GM23248 (cell line): ENCODE measurements at regions of chr7 and their contacts with region 1.

Region 1: GRCh38 chr7:47991741-47992311 is 12.4 kb upstream of the HUS1 start:
- DNase-seq: peak; percentile 84
- H3K4me3 ChIP-seq: peak overlapping the region; percentile 75
- H3K27ac ChIP-seq: peak overlapping the region; percentile 23; the same call in 1 of the 2 replicates
- H3K4me1 ChIP-seq: peaks cover 6% of the 10 kb centered on the region; the same call in 1 of the 2 replicates
- H3K27me3 ChIP-seq: no peaks in the 10 kb centered on the region

Region 2: GRCh38 chr7:48089046-48090003 is 97.5 kb after region 1 on chr7 and contains the start of gene UPP1:
- in situ Hi-C with region 1: loop called (anchors 10 kb)
- DNase-seq: peak; percentile 52
- H3K4me3 ChIP-seq: peak within 1 kb of the TSS; percentile 71
- H3K27ac ChIP-seq: peak within 1 kb of the TSS; percentile 92
- H3K4me1 ChIP-seq: peaks cover 43% of the 10 kb centered on the region
- H3K27me3 ChIP-seq: no peaks in the 10 kb centered on the region
- total RNA-seq, gene UPP1: 12.5 and 12.9 TPM in 2 replicates

Region 3: DNA sequence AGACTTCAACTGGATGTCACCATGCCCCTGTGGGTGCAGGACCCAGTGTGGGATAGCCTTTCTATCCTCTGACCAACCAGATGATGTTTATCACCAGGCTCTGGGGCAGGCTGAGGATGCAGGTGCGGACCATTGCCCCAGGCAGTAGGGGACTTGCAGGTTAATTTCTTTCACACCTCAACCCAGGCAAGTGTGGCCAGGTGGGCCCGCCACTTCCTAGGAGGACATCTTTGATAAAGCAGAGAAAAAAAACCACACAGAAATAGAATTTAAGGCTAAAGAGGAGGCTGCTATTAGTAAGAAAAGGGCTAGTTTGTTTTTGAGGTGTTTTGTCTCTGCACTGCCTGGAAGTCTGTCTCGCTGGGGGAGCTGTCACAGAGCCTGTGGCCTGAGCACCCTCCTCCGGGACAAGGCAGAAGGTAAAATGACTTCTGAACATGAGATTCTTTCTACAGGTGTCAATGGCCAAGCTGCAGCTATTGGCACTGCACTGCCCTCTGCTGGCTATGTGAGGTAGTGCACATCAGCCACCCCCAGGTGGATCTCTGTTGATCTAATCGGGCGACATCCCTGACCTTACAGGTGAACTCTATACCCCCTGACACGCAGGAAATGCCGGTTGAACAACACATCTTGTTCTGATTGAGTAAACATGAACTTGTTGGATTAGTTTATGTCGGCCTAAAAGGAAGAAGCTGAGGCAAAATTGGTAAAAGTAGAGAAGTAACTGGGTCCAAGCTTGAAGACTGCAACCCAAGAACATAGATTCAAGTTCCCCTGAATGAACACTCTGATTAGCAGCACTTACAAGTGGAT is 118.2 kb after region 1 on chr7:
- in situ Hi-C with region 1: loop called (anchors 5 kb)
- DNase-seq: peak; percentile 49
- H3K4me3 ChIP-seq: no peak overlapping the region
- H3K27ac ChIP-seq: no peak overlapping the region
- H3K4me1 ChIP-seq: peaks cover 13% of the 10 kb centered on the region
- H3K27me3 ChIP-seq: no peaks in the 10 kb centered on the region